IMR-90 (cell line): ENCODE measurements at regions of chr1 and their contacts with region 1.

Region 1: DNA sequence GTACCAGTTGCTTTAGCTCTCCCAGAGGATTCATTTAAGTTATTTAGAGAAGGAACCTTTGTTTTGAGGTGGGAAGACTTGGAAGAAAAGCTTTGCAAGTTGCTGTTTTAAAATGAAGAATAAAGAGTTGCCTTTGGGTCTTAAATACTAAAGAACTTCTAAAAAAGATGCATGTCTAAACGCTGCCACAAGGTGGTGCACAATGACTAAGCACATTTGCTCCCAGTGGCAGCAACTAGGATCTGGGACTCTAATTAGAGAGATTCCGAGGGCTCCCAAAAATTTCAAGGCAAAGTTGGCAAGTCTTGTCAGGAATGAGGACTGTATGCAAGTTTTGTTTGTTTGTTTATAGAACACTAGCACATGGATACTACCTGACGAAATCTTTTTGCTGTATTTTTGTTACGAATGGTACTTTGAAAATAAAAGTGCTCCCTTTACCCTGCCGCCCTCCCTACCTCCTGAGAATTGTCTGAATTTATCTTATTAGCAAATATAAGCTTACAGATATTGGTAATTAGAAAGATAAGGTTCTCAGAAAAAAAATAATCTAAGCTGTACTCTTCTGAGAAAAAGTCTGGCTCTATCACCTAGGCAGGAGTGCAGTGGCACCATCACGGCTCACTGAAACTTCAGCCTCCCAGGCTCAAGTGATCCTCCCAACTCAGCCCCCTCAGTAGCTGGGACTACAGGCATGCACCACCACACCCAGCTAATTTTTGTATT is 121.8 kb downstream of the HFM1 start:
- DNase-seq: peak; percentile 73
- ATAC-seq: peak; percentile 91
- H3K4me3 ChIP-seq: no peak overlapping the region
- H3K27ac ChIP-seq: no peak overlapping the region
- H3K4me1 ChIP-seq: no peaks in the 10 kb centered on the region
- H3K27me3 ChIP-seq: no peaks in the 10 kb centered on the region; the same call in 1 of the 2 replicates
- CTCF ChIP-seq: peak; percentile 80
- POLR2A ChIP-seq: no peak
- RAD21 ChIP-seq: peak; percentile 80

Region 2: GRCh38 chr1:90133133-90133532 is 1149.7 kb before region 1 on chr1:
- CTCF ChIA-PET with region 1: no interaction called
- POLR2A ChIA-PET with region 1: no interaction called
- dilution Hi-C with region 1: no loop called
- in situ Hi-C with region 1: no loop called
- intact Hi-C with region 1: loop called (anchors 5 kb)
- DNase-seq: peak; percentile 3
- ATAC-seq: peak; percentile 32; the same call in 1 of the 2 replicates
- H3K4me3 ChIP-seq: no peak overlapping the region
- H3K27ac ChIP-seq: no peak overlapping the region
- H3K4me1 ChIP-seq: no peaks in the 10 kb centered on the region
- H3K27me3 ChIP-seq: no peaks in the 10 kb centered on the region
- CTCF ChIP-seq: peak; percentile 32
- POLR2A ChIP-seq: no peak
- RAD21 ChIP-seq: no peak

Region 3: GRCh38 chr1:90721210-90722194 is 561.4 kb before region 1 on chr1:
- CTCF ChIA-PET with region 1: interaction called, 3 read pairs
- POLR2A ChIA-PET with region 1: no interaction called
- dilution Hi-C with region 1: no loop called
- in situ Hi-C with region 1: no loop called
- intact Hi-C with region 1: loop called (anchors 10 kb)
- DNase-seq: peak; percentile 41
- ATAC-seq: peak; percentile 69
- H3K4me3 ChIP-seq: no peak overlapping the region
- H3K27ac ChIP-seq: no peak overlapping the region
- H3K4me1 ChIP-seq: no peaks in the 10 kb centered on the region
- H3K27me3 ChIP-seq: peaks cover 85% of the 10 kb centered on the region
- CTCF ChIP-seq: peak; percentile 78
- POLR2A ChIP-seq: no peak
- RAD21 ChIP-seq: peak; percentile 70

Region 4: DNA sequence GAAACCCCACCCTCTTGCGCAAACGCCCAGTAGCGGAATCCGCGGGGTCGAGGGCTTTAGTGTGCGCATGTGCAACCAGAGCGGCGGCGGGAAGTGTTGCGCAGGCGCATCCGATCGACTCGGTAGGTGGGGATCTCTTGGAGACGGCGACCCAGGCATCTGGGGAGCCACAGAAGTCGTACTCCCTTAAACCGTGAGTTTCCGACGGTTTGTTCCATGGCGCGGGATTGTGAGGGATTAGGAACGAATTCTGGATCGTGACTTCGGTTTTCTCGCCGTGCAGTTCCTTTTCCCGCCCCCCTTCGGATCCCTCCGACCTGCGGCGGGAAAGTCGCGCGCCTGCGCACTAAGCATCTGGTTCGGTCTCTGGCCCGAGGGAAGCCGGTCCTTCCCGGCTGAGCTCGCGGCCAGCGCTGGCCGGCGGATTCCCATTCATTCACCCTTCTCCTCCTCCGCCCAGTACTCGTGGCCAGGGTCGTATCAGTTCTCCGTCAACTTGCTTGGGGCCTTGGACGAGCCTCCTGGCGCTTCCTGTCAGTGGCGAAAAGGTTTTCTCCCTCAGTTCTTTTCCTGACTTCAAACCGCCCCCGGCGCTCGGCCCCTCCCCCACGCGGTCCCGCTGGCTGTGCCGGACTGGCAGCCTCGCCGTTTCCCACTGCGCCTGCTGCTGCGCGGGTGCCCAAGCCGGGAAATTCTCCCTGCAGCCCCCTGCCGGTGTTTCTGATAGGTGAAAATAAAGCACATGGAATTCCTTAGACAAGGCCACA is 218.1 kb after region 1 on chr1 and contains the start of gene CDC7:
- CTCF ChIA-PET with region 1: no interaction called
- POLR2A ChIA-PET with region 1: no interaction called
- dilution Hi-C with region 1: no loop called
- in situ Hi-C with region 1: loop called (anchors 10 kb)
- intact Hi-C with region 1: loop called (anchors 1 kb)
- DNase-seq: peak; percentile 87
- ATAC-seq: peak; percentile 92
- H3K4me3 ChIP-seq: peak within 1 kb of the TSS; percentile 59
- H3K27ac ChIP-seq: peak within 1 kb of the TSS; percentile 66
- H3K4me1 ChIP-seq: no peaks in the 10 kb centered on the region; the same call in 1 of the 2 replicates
- H3K27me3 ChIP-seq: no peaks in the 10 kb centered on the region
- CTCF ChIP-seq: peak; percentile 40
- POLR2A ChIP-seq: 0 out of 2 replicates have a peak, but pooled peaks have one; percentile 42
- RAD21 ChIP-seq: peak; percentile 25
- total RNA-seq, gene CDC7: 4.7 and 6.9 TPM in 2 replicates

Region 5: GRCh38 chr1:92298573-92299476 is 1016.0 kb after region 1 on chr1 and contains the starts of genes GLMN and RPAP2:
- CTCF ChIA-PET with region 1: no interaction called
- POLR2A ChIA-PET with region 1: no interaction called
- dilution Hi-C with region 1: no loop called
- in situ Hi-C with region 1: no loop called
- intact Hi-C with region 1: loop called (anchors 10 kb)
- DNase-seq: peak; percentile 81
- ATAC-seq: peak; percentile 99
- H3K4me3 ChIP-seq: peak within 1 kb of the TSS; percentile 90
- H3K27ac ChIP-seq: peak within 1 kb of the TSS; percentile 96
- H3K4me1 ChIP-seq: no peaks in the 10 kb centered on the region; the same call in 1 of the 2 replicates
- H3K27me3 ChIP-seq: no peaks in the 10 kb centered on the region
- CTCF ChIP-seq: peak; percentile 16; the same call in 1 of the 2 replicates
- POLR2A ChIP-seq: peak; percentile 74; the same call in 1 of the 2 replicates
- RAD21 ChIP-seq: no peak
- total RNA-seq, gene GLMN: 4.1 and 11.9 TPM in 2 replicates
- total RNA-seq, gene RPAP2: 13.6 TPM in 2 replicates